ENCODE measurements at regions of chr14 and their contacts with region 1.

Region 1: GRCh38 chr14:89027097-89027740 is 202.8 kb downstream of the TTC8 start:
- DNase-seq: peak; percentile 65
- ATAC-seq: peak; percentile 94
- H3K4me3 Mint-ChIP-seq: peak overlapping the region; percentile 61
- H3K27ac Mint-ChIP-seq: no peak overlapping the region
- H3K4me1 Mint-ChIP-seq: peaks cover 12% of the 10 kb centered on the region
- H3K27me3 Mint-ChIP-seq: peaks cover 45% of the 10 kb centered on the region

Region 2: GRCh38 chr14:89040460-89041259 is 13.4 kb after region 1 on chr14:
- CTCF ChIA-PET with region 1: interaction called, 25 read pairs
- POLR2A ChIA-PET with region 1: no interaction called
- DNase-seq: peak; percentile 85
- ATAC-seq: peak; percentile 88
- H3K4me3 Mint-ChIP-seq: peak overlapping the region; percentile 40
- H3K27ac Mint-ChIP-seq: peak overlapping the region; percentile 59
- H3K4me1 Mint-ChIP-seq: peaks cover 12% of the 10 kb centered on the region
- H3K27me3 Mint-ChIP-seq: peaks cover 19% of the 10 kb centered on the region

Region 3: DNA sequence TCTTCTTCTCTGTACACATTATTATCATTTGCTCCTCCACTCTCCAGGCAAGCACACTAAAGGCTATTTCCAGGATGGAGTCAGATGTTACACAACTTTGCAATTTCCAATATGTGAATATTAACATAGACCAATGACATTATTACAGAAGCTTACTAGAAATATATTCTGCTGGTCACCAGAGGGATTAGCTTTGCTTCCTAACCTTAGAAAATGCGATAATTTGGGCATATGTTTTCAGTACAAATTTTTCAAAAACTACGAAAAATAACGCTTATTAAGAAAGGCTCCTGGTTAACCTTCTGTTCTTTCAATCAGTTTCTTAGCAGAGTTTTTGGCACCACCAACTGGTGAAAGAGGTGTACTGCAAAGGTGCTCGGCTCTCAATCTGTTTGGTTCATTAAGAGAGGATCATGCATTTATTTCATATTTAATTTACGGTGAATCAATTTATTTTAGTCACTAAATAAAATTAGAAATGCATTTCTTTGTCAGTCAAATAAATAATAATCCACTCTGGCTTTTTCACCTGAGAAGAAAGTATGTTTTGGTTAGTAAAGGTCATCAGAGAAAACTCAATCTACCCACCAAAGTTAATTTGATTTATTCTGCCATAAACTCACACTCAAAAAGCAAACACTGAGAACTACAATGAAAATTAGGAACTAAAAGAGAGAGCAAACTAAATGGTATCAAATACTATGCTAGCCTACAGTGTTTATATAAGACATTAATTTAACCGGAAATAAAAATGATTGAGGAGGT is 888.1 kb after region 1 on chr14:
- CTCF ChIA-PET with region 1: interaction called, 21 read pairs
- POLR2A ChIA-PET with region 1: no interaction called
- DNase-seq: peak; percentile 73
- ATAC-seq: no peak
- H3K4me3 Mint-ChIP-seq: no peak overlapping the region
- H3K27ac Mint-ChIP-seq: no peak overlapping the region
- H3K4me1 Mint-ChIP-seq: peaks cover 4% of the 10 kb centered on the region
- H3K27me3 Mint-ChIP-seq: peaks cover 17% of the 10 kb centered on the region

Measured in activated CD8-positive, alpha-beta T cell treated with anti-CD3 and anti-CD28 coated beads, Interleukin-2, amount 10 ng/mL, durations not matched to agents 7 days and 5 days (primary cell).